ENCODE measurements at regions of chr7 and their contacts with region 1.

Region 1: DNA sequence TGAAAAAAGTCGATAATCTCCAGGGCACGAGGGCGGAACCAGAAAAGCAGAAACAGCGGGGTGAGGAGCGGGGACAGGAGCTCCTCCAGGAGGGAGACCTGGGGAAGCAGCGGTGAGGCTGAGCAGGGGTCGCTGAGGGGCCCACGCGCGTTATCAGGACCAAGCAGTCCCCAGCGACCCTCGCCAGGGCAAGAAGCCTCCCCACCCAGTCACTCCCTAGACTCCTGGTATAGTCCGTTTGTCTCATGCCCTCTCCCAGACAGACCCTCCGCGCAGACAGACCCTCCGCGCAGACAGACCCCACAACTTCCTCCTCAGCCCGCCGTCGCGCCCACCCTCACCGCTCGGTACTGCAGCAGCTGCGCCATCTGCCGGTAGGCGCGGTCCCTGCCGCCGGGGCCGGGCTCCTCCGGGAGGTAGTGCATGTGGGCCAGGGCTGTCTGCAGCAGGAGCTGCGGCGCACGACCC is 6.3 kb downstream of the ATG9B start:
- DNase-seq: peak; percentile 98
- H3K4me3 ChIP-seq: peak overlapping the region; percentile 28 to 34
- H3K27ac ChIP-seq: peak overlapping the region in 1 of 2 experiments; percentile 18; a peak in 2 of 4 replicates
- H3K4me1 ChIP-seq: peaks cover 0 to 27% of the 10 kb centered on the region in 2 experiments; a peak in 1 of 4 replicates
- H3K27me3 ChIP-seq: peaks cover 15% of the 10 kb centered on the region; the same call in 1 of the 2 replicates
- CTCF ChIP-seq: peak; percentile 99
- EP300 ChIP-seq: no peak
- RAD21 ChIP-seq: peak; percentile 73

Region 2: GRCh38 chr7:150778738-150779301 is 239.2 kb before region 1 on chr7:
- CTCF ChIA-PET with region 1: interaction called, 19 read pairs
- POLR2A ChIA-PET with region 1: no interaction called
- DNase-seq: peak; percentile 78
- H3K4me3 ChIP-seq: no peak overlapping the region; a peak in 1 of 4 replicates
- H3K27ac ChIP-seq: 0 out of 4 replicates have a peak overlapping the region, but pooled peaks of 1 of the 2 experiments have one; percentile 7
- H3K4me1 ChIP-seq: peaks cover 0 to 6% of the 10 kb centered on the region in 2 experiments; a peak in 2 of 4 replicates
- H3K27me3 ChIP-seq: no peaks in the 10 kb centered on the region; the same call in 1 of the 2 replicates
- CTCF ChIP-seq: peak; percentile 99
- EP300 ChIP-seq: no peak
- RAD21 ChIP-seq: peak; percentile 100

Region 3: GRCh38 chr7:150898475-150899011 is 119.4 kb before region 1 on chr7:
- CTCF ChIA-PET with region 1: interaction called, 17 read pairs
- POLR2A ChIA-PET with region 1: interaction called, 3 read pairs
- DNase-seq: peak; percentile 90
- H3K4me3 ChIP-seq: no peak overlapping the region
- H3K27ac ChIP-seq: peak overlapping the region in 1 of 2 experiments; percentile 34; a peak in 1 of 4 replicates
- H3K4me1 ChIP-seq: peaks cover 2 to 48% of the 10 kb centered on the region in 2 experiments; a peak in 2 of 4 replicates
- H3K27me3 ChIP-seq: no peaks in the 10 kb centered on the region
- CTCF ChIP-seq: peak; percentile 99
- EP300 ChIP-seq: no peak
- RAD21 ChIP-seq: peak; percentile 98

Region 4: DNA sequence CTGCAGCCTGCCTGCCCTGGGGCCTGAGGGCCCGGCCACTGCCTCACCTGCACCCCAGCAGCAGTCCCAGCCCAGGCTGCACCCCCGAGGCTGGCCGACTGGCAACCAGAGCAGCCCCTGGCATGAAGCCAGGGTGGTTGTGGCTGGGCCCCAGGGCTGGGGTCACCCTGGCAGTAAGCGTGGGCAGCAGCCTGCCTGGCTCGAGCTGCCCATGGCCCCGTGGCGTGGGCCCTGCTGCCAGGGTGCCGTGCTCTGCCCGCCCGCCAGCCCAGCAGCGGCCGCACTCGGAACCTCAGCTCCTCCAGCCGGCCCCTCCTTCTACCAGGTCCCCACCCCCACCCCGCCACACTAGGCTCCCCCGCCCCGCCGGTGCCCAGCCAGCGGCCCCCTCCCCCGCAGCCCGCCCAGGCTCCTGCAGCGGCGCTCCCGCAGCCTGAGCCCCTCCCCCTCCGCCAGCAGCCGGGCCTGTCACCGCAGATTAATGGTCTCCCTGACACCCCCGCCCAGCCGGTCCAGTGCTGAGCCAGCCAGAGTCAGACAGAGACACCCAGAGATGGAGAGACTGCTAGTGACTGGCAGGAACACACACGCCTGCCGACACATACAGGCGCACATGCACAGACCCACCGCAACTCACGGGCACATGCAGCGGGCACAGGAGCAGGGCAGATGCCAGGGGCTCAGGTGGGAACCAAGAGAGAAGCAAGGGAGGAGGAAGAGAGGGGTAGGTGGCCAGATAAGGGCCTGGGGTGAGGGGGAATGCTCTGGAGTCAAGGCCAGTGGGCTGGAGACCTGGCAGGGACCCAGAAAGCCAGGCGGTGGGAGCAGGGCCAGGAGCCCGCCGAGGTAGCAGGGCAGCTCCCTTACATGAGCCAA is 62.2 kb before region 1 on chr7:
- CTCF ChIA-PET with region 1: interaction called, 60 read pairs
- POLR2A ChIA-PET with region 1: no interaction called
- DNase-seq: peak; percentile 97
- H3K4me3 ChIP-seq: peak overlapping the region in 1 of 2 experiments; percentile 45; a peak in 2 of 4 replicates
- H3K27ac ChIP-seq: peak overlapping the region in 1 of 2 experiments; percentile 94; a peak in 3 of 4 replicates
- H3K4me1 ChIP-seq: peaks cover 0 to 85% of the 10 kb centered on the region in 2 experiments; a peak in 2 of 4 replicates
- H3K27me3 ChIP-seq: peaks cover 15% of the 10 kb centered on the region; the same call in 1 of the 2 replicates
- CTCF ChIP-seq: no peak
- EP300 ChIP-seq: peak in 1 of 2 experiments; percentile 12; a peak in 1 of 4 replicates
- RAD21 ChIP-seq: peak; percentile 3; the same call in 1 of the 2 replicates

Region 5: DNA sequence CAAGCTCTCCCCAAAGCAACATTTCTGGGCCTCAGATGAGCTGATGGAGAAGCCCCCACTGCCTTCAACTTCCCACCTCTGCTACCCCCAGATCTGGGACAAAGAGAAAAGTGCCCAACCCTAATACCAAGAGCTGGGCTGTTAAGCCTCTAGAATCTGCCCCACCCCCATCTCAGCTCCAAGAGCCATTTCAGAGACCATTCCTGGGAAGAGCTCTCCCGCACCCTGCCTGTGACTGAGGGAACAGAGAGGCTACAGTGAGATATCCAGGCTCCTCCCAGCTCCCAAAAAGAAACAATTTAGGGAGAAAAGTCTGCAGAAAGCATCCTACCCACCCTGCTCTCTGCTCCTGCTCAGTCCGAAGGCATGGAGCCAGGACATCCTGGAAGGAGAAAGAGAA is 37.3 kb before region 1 on chr7:
- CTCF ChIA-PET with region 1: interaction called, 74 read pairs
- POLR2A ChIA-PET with region 1: interaction called, 3 read pairs
- DNase-seq: peak; percentile 28
- H3K4me3 ChIP-seq: no peak overlapping the region
- H3K27ac ChIP-seq: peak overlapping the region in 1 of 2 experiments; percentile 81; a peak in 1 of 4 replicates
- H3K4me1 ChIP-seq: peaks cover 0 to 44% of the 10 kb centered on the region in 2 experiments; a peak in 2 of 4 replicates
- H3K27me3 ChIP-seq: peaks cover 52% of the 10 kb centered on the region
- CTCF ChIP-seq: no peak
- EP300 ChIP-seq: no peak
- RAD21 ChIP-seq: peak; percentile 62

Region 6: DNA sequence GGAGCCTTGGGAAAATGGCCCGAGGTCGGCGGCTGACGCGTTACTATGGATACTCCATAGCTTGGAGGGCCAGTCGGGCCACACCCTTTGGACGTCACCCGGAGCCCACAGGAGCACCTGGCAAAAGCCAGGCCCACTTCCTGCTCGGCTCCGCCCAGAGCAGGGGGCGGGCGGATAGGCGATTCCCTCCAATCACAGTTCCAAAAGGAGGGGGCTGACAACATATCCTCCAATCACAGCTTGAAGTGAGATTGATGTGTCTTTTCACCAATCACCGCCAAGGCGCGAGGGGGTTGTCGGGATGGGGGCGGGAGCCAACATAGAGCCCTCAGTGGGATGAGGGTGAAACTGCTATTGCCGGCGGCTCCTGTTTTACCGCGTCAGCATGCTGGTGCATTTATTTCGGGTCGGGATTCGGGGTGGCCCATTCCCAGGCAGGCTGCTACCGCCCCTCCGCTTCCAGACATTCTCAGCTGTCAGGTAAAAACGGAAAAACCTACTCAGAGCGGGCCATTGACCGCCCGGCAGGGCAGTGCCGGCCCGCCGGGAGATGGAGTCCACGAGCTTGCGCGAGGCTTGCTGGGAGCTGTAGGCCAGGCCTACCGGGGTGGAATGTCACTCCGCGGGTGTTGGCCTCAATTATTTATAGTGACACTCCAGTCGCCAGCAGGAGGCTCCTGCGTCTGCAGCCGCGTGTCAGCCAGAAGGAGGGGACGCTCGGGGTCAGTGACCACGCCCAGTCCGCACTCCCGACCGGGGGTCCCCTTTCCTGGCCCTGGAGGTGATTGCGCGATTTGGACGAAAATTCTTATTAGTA is 10.4 kb after region 1 on chr7 and contains the start of gene ABCB8:
- CTCF ChIA-PET with region 1: interaction called, 65 read pairs
- POLR2A ChIA-PET with region 1: interaction called, 15 read pairs
- DNase-seq: peak; percentile 100
- H3K4me3 ChIP-seq: peak within 1 kb of the TSS; percentile 84 to 85
- H3K27ac ChIP-seq: peak within 1 kb of the TSS; percentile 69 to 90
- H3K4me1 ChIP-seq: peaks cover 7 to 10% of the 10 kb centered on the region in 2 experiments; a peak in 2 of 4 replicates
- H3K27me3 ChIP-seq: no peaks in the 10 kb centered on the region
- CTCF ChIP-seq: peak; percentile 59
- EP300 ChIP-seq: no peak
- RAD21 ChIP-seq: peak; percentile 83
- polyA plus RNA-seq, gene ABCB8: 36.0 and 38.3 TPM in 2 replicates

Region 7: GRCh38 chr7:151057989-151058780 is 40.2 kb after region 1 on chr7:
- CTCF ChIA-PET with region 1: interaction called, 13 read pairs
- POLR2A ChIA-PET with region 1: no interaction called
- DNase-seq: peak; percentile 99
- H3K4me3 ChIP-seq: peak overlapping the region; percentile 66 to 99
- H3K27ac ChIP-seq: peak overlapping the region; percentile 95 to 99
- H3K4me1 ChIP-seq: peaks cover 28 to 52% of the 10 kb centered on the region in 2 experiments
- H3K27me3 ChIP-seq: no peaks in the 10 kb centered on the region
- CTCF ChIP-seq: no peak
- EP300 ChIP-seq: no peak
- RAD21 ChIP-seq: no peak

Region 8: GRCh38 chr7:151130741-151131157 is 112.8 kb after region 1 on chr7:
- CTCF ChIA-PET with region 1: no interaction called
- POLR2A ChIA-PET with region 1: no interaction called
- DNase-seq: no peak
- H3K4me3 ChIP-seq: no peak overlapping the region
- H3K27ac ChIP-seq: peak overlapping the region in 1 of 2 experiments; percentile 13; a peak in 1 of 4 replicates
- H3K4me1 ChIP-seq: peaks cover 0 to 34% of the 10 kb centered on the region in 2 experiments; a peak in 1 of 4 replicates
- H3K27me3 ChIP-seq: no peaks in the 10 kb centered on the region
- CTCF ChIP-seq: no peak
- EP300 ChIP-seq: no peak
- RAD21 ChIP-seq: no peak

Measured in SK-N-SH (cell line).